ENCODE measurements at regions of chr11 and their contacts with region 1.

Region 1: DNA sequence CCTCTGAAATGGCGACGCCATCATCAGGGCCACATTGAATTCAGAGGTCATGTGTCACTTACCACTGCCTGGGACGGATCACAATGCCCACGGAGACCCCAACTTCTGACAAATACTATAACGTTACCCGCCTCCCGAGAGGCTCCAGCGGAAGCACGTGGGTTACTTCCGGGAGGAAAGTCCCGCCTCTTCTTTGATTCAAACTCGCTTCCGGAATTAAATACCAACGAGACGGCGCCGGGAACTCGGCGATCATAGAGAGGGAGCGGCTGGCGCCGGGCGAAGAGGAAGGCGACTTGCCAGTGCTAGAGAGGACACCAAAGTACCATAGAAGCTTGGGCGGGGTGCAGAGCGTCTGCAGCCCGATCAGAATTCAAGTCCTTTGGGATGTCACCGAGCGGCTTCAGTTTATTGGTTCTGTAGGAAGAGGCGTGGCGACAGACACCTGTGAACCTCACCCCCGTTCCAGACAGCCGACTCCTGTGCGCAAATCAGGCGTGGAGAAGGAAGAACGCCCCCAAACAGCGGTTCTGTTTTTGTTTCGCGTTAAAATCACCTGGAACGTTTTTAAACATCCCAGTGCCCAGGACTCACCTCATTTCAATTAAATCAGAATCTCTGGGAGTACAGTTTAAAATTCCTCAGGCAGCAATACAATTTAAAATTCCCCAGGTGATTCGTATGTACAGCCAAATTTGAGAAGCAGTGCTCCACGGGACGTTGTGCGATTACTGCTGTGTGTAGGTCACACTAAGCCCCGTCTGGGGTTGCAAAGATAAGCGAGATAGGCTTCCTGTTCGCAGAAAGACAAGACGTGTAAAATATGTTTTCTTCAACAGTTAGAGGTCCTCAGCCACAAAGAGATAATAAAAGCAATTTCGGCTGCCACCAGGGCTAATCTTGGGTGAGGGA is at the start of gene TIMM10:
- DNase-seq: peak; percentile 94
- ATAC-seq: peak; percentile 98
- H3K4me3 Mint-ChIP-seq: peak within 1 kb of the TSS; percentile 96
- H3K27ac Mint-ChIP-seq: peak within 1 kb of the TSS; percentile 98
- H3K4me1 Mint-ChIP-seq: peaks cover 18% of the 10 kb centered on the region
- H3K27me3 Mint-ChIP-seq: peaks cover 9% of the 10 kb centered on the region
- CTCF ChIP-seq: no peak
- total RNA-seq, gene TIMM10: 63.5 to 92.8 TPM (median 68.4 TPM) in 3 replicates

Region 2: GRCh38 chr11:57474017-57474802 is 56.6 kb before region 1 on chr11:
- CTCF ChIA-PET with region 1: interaction called, 35 read pairs
- POLR2A ChIA-PET with region 1: no interaction called
- DNase-seq: no peak
- ATAC-seq: peak; percentile 29
- H3K4me3 Mint-ChIP-seq: no peak overlapping the region
- H3K27ac Mint-ChIP-seq: no peak overlapping the region
- H3K4me1 Mint-ChIP-seq: peaks cover 45% of the 10 kb centered on the region
- H3K27me3 Mint-ChIP-seq: peaks cover 46% of the 10 kb centered on the region
- CTCF ChIP-seq: no peak

Region 3: GRCh38 chr11:57480409-57481137 is 50.3 kb before region 1 on chr11:
- CTCF ChIA-PET with region 1: interaction called, 35 read pairs
- POLR2A ChIA-PET with region 1: no interaction called
- DNase-seq: peak; percentile 93
- ATAC-seq: peak; percentile 60
- H3K4me3 Mint-ChIP-seq: no peak overlapping the region
- H3K27ac Mint-ChIP-seq: 0 out of 2 replicates have a peak overlapping the region, but pooled peaks have one; percentile 14
- H3K4me1 Mint-ChIP-seq: peaks cover 56% of the 10 kb centered on the region
- H3K27me3 Mint-ChIP-seq: peaks cover 74% of the 10 kb centered on the region
- CTCF ChIP-seq: peak; percentile 73

Region 4: DNA sequence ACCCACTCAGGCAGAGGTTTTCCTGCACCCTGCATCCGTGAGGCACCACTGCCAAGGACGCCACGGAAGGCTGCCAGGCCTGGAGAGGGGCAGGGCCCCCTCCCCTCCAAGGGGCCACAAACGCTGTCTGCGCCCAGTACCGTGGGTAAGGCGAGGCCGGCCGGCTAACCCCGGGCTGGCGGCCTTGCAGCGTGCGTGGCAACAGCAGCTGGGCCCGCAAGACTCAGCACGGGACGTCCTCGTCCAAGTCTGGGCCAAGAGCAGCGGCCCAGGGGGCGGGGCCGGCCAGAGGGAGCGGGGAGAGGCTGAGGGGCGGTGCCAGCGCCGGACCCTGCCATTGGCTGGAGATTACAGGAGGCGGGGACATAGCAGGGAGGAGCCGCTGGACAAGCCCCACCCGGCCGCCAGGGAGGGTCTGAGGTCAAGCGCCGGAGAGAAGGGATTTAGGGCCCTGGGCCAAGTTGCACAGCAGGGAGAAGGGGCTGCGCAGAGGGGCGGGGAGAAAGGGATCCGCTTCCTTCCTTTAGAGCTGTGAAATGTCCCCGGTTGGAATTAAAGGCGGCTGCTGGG is 31.4 kb before region 1 on chr11:
- CTCF ChIA-PET with region 1: interaction called, 260 read pairs
- POLR2A ChIA-PET with region 1: interaction called, 3 read pairs
- DNase-seq: peak; percentile 99
- ATAC-seq: peak; percentile 100
- H3K4me3 Mint-ChIP-seq: peak overlapping the region; percentile 51
- H3K27ac Mint-ChIP-seq: peak overlapping the region; percentile 86; the same call in 1 of the 2 replicates
- H3K4me1 Mint-ChIP-seq: peaks cover 41% of the 10 kb centered on the region
- H3K27me3 Mint-ChIP-seq: no peaks in the 10 kb centered on the region; the same call in 1 of the 2 replicates
- CTCF ChIP-seq: no peak

Region 5: DNA sequence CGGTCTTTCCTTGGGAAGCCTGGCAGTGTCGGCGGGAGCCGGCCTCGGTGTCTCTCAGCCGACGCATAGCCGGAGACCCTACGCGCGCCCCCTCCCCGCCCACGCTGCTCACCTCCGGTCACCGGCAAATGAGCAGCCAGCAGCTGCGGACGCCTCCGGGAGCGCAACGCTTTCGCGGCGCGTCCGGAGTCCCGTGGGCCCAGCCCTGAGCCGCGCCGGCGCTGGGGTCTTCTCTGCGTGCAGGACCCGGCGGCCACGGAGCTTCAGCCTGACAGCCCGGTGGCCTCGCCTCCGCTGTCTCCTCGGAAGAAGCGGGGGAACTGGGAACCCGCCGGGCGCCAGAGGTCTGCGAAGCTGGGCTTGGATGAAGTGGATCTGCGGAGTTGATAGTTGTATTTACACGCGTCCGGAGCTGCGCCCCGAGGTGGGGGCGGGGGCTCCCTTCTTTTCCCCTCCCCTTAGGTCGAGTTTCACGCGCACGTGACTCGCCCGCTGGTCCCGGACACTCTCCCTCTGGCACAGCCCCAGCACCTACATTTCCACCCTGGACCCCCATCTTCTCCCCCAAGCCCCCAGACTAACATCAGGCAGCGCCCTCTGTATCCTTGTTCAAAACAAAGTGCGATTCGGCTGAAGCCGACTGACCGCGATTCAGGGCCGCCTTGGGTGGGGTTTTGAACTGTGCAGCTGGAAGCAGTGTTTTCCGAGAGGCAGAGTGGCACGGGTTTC is 15.4 kb before region 1 on chr11 and contains the start of gene SLC43A1:
- CTCF ChIA-PET with region 1: interaction called, 48 read pairs
- POLR2A ChIA-PET with region 1: interaction called, 3 read pairs
- DNase-seq: peak; percentile 54
- ATAC-seq: peak; percentile 29
- H3K4me3 Mint-ChIP-seq: peak within 1 kb of the TSS; percentile 93
- H3K27ac Mint-ChIP-seq: no peak within 1 kb of the TSS
- H3K4me1 Mint-ChIP-seq: peaks cover 20% of the 10 kb centered on the region
- H3K27me3 Mint-ChIP-seq: peaks cover 22% of the 10 kb centered on the region
- CTCF ChIP-seq: no peak
- total RNA-seq, gene SLC43A1: 20.5 to 27.1 TPM (median 21.5 TPM) in 3 replicates

Measured in WTC11 (cell line).